Naive thymus-derived CD4-positive, alpha-beta T cell (primary cell): ENCODE measurements at regions of chr12 and their contacts with region 1.

Region 1: DNA sequence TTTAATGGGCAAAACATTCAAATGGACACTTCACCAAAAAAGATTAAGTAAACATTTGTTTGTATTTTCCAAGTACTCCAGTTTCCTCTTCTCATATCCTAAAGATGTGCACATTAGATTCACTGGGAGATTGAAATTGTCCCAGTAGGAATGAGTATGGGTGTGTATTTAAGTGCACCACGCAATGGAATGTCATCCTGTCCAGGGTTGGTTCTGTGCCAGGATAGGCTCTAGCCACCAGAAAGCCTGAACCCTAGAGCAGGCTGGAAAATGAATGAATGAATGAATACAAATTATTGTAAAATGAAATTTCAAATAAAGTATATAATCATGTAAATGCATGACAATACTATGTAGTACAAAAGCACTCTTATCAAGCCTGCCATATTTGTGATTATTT is 14.0 kb downstream of the CEP83 start:
- DNase-seq: no peak
- ATAC-seq: no peak
- H3K4me3 ChIP-seq: no peak overlapping the region
- H3K4me3 Mint-ChIP-seq: no peak overlapping the region
- H3K27ac ChIP-seq: no peak overlapping the region
- H3K27ac Mint-ChIP-seq: no peak overlapping the region
- H3K4me1 ChIP-seq: no peaks in the 10 kb centered on the region
- H3K4me1 Mint-ChIP-seq: peaks cover 0 to 24% (median 14%) of the 10 kb centered on the region in 7 donors
- H3K27me3 ChIP-seq: no peaks in the 10 kb centered on the region
- H3K27me3 Mint-ChIP-seq: no peaks in the 10 kb centered on the region

Region 2: DNA sequence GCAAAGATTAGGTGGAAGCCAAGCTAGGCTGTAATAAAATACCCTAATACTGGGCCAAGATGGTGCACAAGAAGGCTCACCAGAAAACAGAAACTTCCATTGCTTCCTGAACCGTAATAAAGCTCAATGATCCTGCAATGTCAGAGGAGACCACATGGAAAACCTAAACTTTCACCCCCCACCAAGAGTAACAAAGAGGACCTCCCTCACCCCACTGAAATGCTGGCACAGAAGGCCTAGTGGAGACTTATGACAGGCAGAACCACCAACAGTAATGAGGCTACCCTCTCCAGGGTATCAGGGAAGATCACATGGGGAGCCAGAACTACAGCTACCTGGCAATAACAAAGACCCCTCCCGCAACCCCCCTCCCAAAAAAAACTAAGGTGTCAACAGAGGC is 29.0 kb before region 1 on chr12:
- CTCF ChIA-PET with region 1: no interaction called
- POLR2A ChIA-PET with region 1: no interaction called
- intact Hi-C with region 1: loop called in 1 of 2 experiments (anchors 1 kb)
- DNase-seq: no peak
- ATAC-seq: no peak
- H3K4me3 ChIP-seq: no peak overlapping the region
- H3K4me3 Mint-ChIP-seq: no peak overlapping the region
- H3K27ac ChIP-seq: no peak overlapping the region
- H3K27ac Mint-ChIP-seq: no peak overlapping the region
- H3K4me1 ChIP-seq: no peaks in the 10 kb centered on the region
- H3K4me1 Mint-ChIP-seq: peaks cover 0 to 10% (median 0%) of the 10 kb centered on the region in 7 donors
- H3K27me3 ChIP-seq: no peaks in the 10 kb centered on the region
- H3K27me3 Mint-ChIP-seq: no peaks in the 10 kb centered on the region